Posterior cingulate gyrus (tissue), 11 donors: ENCODE measurements at regions of chr1 and their contacts with region 1.

Region 1: DNA sequence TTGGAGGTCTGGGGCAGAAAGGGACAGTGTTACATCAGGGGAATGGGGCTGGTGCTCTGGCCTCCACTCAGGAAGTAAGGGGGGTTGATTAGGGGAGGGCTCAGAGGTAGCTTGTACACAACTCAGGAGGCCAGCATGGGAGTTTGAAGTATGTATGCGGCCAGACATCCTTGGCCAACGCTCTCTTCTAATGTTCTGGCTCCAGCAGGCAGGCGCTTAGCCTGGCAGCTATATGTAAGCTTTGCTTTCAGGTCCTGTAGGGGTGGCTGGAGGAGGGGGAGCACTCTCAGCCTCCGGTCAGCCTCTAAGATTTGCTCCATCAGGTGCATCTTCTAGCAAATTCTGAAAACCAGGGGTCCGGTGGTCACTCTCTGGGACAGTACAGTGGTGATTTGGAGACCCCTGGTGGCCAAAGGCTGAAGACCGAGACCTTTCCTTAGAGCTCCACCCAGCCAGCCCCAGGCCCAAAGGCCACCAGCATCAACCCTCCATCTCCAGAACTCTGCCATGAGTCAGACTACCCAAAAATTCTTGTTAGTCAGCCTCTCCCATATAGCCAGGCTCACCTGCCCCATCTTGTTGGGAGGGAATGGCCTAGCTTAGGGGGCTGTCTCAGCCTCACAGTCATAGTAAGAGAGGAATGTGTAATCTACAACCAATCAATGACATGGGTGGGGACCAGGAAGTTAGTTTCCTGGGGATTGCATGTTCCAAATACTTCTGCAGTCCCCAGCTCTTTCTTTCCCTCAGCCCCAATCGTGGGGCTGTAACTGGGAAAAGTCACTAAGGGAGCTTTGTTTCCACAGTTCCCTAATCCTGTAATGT is 9.7 kb upstream of the COL8A2 start:
- DNase-seq: peak in 5 of 10 donors; percentile 56 to 87 (median 67)

Region 2: GRCh38 chr1:35988237-35988636 is 146.5 kb before region 1 on chr1:
- intact Hi-C with region 1: no loop called
- DNase-seq: no peak

Region 3: DNA sequence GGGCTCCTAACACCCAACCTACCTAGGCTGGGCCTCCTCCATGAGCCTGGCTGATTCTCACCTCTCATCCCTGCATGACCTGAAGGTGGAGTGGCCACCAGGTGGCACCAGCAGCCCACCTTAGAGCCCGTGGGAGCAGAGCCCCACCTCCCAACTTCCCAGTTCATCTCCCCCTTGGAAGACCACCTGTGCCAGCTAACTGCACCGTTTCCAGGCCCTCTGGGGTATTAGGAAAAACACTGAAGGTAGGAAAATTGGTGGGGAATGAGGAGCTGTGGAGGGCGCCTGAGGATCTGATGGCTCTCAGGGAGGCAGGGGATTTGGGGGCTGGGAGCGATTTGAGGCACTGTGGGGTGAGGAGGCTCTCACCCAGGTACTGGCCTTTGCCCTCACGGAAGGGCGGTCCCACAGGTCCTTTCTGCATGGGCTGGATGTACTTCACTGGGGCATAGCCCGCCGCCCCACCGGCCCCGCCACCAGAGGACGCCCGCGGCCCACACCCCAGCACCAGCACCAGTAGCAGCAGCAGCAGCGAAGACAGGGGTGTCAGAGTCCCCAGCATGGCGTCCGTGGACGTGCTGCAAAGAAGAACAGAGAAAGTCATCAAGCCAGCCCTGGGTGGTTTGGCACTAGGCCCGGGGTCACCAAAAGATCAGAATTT is 34.9 kb before region 1 on chr1:
- intact Hi-C with region 1: loop called (anchors 1 kb)
- DNase-seq: peak; percentile 49 to 96 (median 82)